K562 (cell line): ENCODE measurements at regions of chr11 and their contacts with region 1.

Region 1: DNA sequence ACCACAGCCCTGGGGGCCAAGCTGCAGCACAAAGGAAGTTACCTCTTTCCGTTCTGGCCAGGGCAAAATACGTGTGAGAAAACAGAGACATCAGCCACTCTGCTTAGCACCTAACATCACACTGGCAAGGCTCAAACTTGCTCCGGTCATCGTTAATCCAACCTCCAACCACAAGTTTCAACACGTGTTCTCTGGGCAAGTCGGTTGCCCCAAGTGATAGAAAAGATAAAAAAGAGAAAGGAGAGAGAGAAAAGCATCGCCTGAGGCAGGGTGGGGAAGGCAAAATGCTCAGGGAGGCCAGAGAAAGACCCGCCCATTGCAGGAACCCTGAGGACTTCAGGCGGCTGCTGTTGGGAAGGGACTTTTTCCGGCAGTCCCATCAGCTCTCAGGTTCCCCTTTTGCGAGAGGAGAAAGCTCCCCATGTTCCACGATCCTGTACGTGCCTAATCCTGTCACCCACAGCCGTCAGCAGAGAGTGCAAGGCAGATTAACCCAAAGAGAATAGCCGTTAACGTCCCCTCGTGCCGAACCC is 18.5 kb upstream of the B4GALNT4 start:
- DNase-seq: peak in 3 of 4 experiments; percentile 20 to 84 (median 42)
- ATAC-seq: peak; percentile 65
- H3K4me3 ChIP-seq: no peak overlapping the region
- H3K27ac ChIP-seq: peak overlapping the region; percentile 88
- H3K4me1 ChIP-seq: peaks cover 61 to 67% of the 10 kb centered on the region in 2 experiments
- H3K27me3 ChIP-seq: no peaks in the 10 kb centered on the region
- CTCF ChIP-seq: no peak
- EP300 ChIP-seq: peak; percentile 49; the same call in 1 of the 2 replicates
- POLR2A ChIP-seq: peak; percentile 57
- RAD21 ChIP-seq: 0 out of 4 replicates have a peak, but pooled peaks of 1 of the 2 experiments have one; percentile 8

Region 2: DNA sequence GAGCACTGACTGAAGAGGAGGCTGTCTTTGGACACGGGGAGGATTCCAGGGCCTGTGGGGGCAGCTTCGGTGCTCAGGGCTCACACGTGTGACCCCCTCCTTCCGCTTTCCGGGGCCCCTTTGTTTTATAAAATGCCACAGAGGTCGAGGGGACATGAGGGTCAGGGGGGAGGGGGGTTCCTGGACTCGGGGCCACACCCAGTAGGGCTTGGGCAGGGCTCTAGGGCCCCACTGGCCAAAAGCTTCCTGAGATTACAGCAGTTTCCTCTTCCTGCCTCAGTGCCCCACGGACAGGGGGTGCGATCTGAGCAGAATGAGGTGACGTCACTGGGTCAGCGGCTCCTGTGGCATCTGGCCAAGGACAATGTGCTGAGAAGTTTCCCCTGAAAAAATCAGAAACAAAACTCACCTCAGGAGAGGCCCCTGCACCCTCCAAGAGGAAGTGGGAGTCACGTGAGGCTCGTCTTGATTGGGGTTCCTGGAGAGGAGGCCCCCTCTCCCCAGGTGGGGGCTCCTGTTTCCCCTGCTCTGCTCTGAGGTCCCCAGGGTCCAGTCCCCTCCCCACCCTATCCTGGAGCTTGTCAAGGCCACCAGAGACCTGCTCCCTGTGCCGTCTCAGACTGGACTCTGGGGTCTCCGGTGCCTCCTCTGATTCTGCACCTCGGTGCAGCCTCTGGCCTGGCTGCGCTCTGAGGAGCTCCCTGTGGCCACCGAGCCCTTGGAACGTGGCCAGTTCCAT is 23.8 kb before region 1 on chr11:
- CTCF ChIA-PET with region 1: interaction called, 3 read pairs
- POLR2A ChIA-PET with region 1: interaction called, 20 read pairs
- in situ Hi-C with region 1: no loop called
- intact Hi-C with region 1: loop called (anchors 1 kb)
- DNase-seq: peak; percentile 42 to 86 (median 53)
- ATAC-seq: peak; percentile 53
- H3K4me3 ChIP-seq: peak overlapping the region; percentile 18; the same call in 1 of the 2 replicates
- H3K27ac ChIP-seq: peak overlapping the region; percentile 88
- H3K4me1 ChIP-seq: peaks cover 51 to 60% of the 10 kb centered on the region in 2 experiments
- H3K27me3 ChIP-seq: no peaks in the 10 kb centered on the region
- CTCF ChIP-seq: no peak
- EP300 ChIP-seq: peak; percentile 16; the same call in 1 of the 2 replicates
- POLR2A ChIP-seq: peak; percentile 53
- RAD21 ChIP-seq: no peak

Region 3: GRCh38 chr11:429931-430456 is 79.2 kb after region 1 on chr11:
- CTCF ChIA-PET with region 1: no interaction called
- POLR2A ChIA-PET with region 1: no interaction called
- in situ Hi-C with region 1: no loop called
- intact Hi-C with region 1: no loop called
- DNase-seq: no peak
- ATAC-seq: no peak
- H3K4me3 ChIP-seq: no peak overlapping the region
- H3K27ac ChIP-seq: no peak overlapping the region
- H3K4me1 ChIP-seq: peaks cover 0 to 39% of the 10 kb centered on the region in 2 experiments; a peak in 2 of 5 replicates
- H3K27me3 ChIP-seq: no peaks in the 10 kb centered on the region
- CTCF ChIP-seq: no peak
- EP300 ChIP-seq: no peak
- POLR2A ChIP-seq: no peak
- RAD21 ChIP-seq: no peak

Region 4: DNA sequence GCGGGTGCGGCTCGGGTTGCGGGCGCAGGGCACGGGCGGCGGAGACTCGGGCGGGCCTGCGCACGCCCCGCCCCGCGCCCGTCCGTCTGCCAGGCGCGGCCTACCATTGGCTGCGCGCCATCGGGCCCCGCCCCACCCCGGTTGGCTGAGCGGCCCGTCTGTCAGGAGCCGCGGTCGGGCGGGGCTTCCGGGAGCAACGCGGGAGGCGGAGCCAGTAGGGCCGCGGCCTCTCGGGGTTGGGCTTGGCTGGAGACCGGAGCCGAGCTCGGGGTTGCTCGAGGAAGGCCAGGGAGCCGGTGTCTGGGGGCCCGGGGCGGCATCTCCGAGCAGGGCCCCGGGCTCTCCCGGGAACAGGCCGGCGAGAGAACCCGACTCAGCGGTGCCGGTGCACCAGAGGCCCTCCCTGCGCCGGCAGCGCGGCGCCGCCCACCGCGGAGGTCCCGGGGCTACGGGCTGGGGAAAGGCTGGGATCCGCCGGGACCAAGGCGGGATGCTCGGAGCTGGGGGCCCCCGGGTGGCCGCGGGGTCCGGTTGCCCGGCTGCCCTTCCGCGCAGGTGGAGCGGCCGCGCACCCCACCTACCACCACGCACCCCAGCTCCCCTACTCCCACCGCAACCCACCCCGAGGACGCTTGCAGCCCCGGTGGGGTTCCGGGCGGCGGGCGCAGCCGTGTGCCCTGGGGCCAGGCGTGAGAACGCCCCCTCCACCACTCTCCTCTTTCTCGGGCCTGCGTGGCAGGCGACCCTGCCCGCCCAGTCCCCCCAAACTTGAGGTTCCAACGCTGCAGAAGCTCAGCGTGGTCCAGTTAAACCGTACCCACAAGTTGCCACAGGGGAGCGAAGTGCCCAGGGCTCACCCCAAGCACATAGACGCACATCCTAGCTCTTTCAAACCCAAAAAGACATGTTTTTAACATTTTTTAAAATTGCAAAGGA is 185.0 kb after region 1 on chr11 and contains the start of gene HRAS:
- CTCF ChIA-PET with region 1: no interaction called
- POLR2A ChIA-PET with region 1: no interaction called
- in situ Hi-C with region 1: no loop called
- intact Hi-C with region 1: no loop called
- DNase-seq: peak; percentile 96 to 100 (median 99)
- ATAC-seq: peak; percentile 95
- H3K4me3 ChIP-seq: peak within 1 kb of the TSS; percentile 78
- H3K27ac ChIP-seq: peak within 1 kb of the TSS; percentile 72
- H3K4me1 ChIP-seq: peaks cover 22 to 82% of the 10 kb centered on the region in 2 experiments
- H3K27me3 ChIP-seq: no peaks in the 10 kb centered on the region
- CTCF ChIP-seq: no peak
- EP300 ChIP-seq: no peak
- POLR2A ChIP-seq: peak; percentile 76
- RAD21 ChIP-seq: no peak
- polyA plus RNA-seq, gene HRAS: 2.8 to 5.8 TPM